Testis (tissue), 5 donors: ENCODE measurements at regions of chr15 and their contacts with region 1.

Region 1: GRCh38 chr15:69265347-69265955 is 33.3 kb upstream of the PAQR5 start:
- DNase-seq: no peak
- H3K4me3 ChIP-seq: no peak overlapping the region
- H3K27ac ChIP-seq: no peak overlapping the region
- H3K4me1 ChIP-seq: no peaks in the 10 kb centered on the region
- H3K27me3 ChIP-seq: no peaks in the 10 kb centered on the region
- CTCF ChIP-seq: peak; percentile 23 to 52 (median 43)
- POLR2A ChIP-seq: no peak

Region 2: GRCh38 chr15:69060041-69060481 is 205.4 kb before region 1 on chr15:
- intact Hi-C with region 1: loop called (anchors 10 kb)
- DNase-seq: peak; percentile 37
- H3K4me3 ChIP-seq: no peak overlapping the region
- H3K27ac ChIP-seq: no peak overlapping the region
- H3K4me1 ChIP-seq: peaks cover 7% of the 10 kb centered on the region
- H3K27me3 ChIP-seq: no peaks in the 10 kb centered on the region
- CTCF ChIP-seq: no peak
- POLR2A ChIP-seq: no peak